Heart left ventricle (tissue), 16 donors: ENCODE measurements at regions of chr3 and their contacts with region 1.

Region 1: DNA sequence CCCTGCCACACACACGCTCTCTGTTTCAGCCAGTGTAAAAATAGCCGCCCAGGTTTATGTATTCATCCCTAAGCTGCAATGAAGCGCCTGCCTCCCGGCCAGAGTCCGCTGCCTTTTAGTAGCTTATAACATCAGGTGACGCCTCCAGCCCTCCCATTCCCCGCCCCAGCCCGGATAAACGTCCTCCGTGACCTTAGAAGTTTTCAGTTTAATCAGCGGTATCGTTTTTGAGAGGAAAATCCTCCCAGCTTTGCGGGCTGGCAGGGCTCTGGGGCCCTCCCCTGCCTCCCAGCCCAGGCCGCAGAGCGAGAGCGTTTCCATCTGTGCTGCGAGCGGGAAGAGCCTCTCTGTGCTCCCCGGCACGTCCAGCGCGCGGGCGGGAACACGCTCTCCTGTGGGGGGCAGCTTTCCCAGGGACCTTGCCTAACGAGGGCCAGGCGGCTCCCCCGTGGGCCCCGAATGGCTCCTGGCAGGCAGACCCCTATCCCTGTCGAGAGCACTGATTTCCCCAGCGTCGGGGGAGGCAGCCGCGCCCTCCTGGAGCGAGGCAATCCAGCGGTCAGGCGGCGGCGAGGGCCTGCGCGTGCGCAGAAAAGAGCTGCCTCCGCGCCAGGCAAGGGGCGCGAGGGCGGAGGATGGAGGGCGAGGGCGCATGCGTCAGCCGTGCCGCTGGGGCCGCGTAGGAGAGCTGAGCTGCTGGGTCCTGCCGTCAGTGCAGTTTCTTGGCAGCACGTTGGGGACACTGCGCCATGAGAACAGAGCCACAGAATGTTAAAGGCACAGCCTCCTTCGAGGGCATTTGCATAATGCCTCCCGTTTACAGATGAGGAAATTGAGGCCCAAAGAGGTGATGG is 71.1 kb downstream of the CCNL1 start:
- DNase-seq: peak; percentile 97 to 99 (median 98)
- ATAC-seq: peak; percentile 83 to 88 (median 84)
- H3K4me3 ChIP-seq: peak overlapping the region; percentile 25 to 73 (median 61)
- H3K27ac ChIP-seq: peak overlapping the region; percentile 96 to 100 (median 99)
- H3K4me1 ChIP-seq: peaks cover 5 to 68% (median 49%) of the 10 kb centered on the region in 12 donors
- H3K27me3 ChIP-seq: no peaks in the 10 kb centered on the region
- CTCF ChIP-seq: peak in 5 of 12 donors; percentile 7 to 38 (median 24)
- POLR2A ChIP-seq: peak; percentile 1 to 88

Region 2: GRCh38 chr3:156535162-156535627 is 553.6 kb before region 1 on chr3:
- intact Hi-C with region 1: loop called in 6 of 10 experiments (anchors 5 kb)
- DNase-seq: peak in 4 of 5 donors; percentile 58 to 89 (median 74)
- ATAC-seq: peak; percentile 81 to 96 (median 94)
- H3K4me3 ChIP-seq: no peak overlapping the region
- H3K27ac ChIP-seq: peak overlapping the region; percentile 16 to 84 (median 68)
- H3K4me1 ChIP-seq: peaks cover 0 to 31% (median 15%) of the 10 kb centered on the region in 12 donors
- H3K27me3 ChIP-seq: no peaks in the 10 kb centered on the region
- CTCF ChIP-seq: peak in 7 of 12 donors; percentile 12 to 46 (median 37)
- POLR2A ChIP-seq: no peak

Region 3: GRCh38 chr3:156554842-156555687 is 533.8 kb before region 1 on chr3 and contains the start of gene SSR3:
- intact Hi-C with region 1: loop called in 5 of 10 experiments (anchors 5 kb)
- DNase-seq: peak; percentile 100
- ATAC-seq: peak; percentile 99 to 100 (median 99)
- H3K4me3 ChIP-seq: peak within 1 kb of the TSS; percentile 81 to 98 (median 90)
- H3K27ac ChIP-seq: peak within 1 kb of the TSS; percentile 84 to 98 (median 93)
- H3K4me1 ChIP-seq: peaks cover 8 to 62% (median 41%) of the 10 kb centered on the region in 12 donors
- H3K27me3 ChIP-seq: no peaks in the 10 kb centered on the region
- CTCF ChIP-seq: peak in 9 of 12 donors; percentile 11 to 41 (median 19)
- POLR2A ChIP-seq: peak; percentile 56 to 90
- total RNA-seq, gene SSR3: 171 to 456 (median 197) TPM

Region 4: GRCh38 chr3:156816800-156817645 is 271.8 kb before region 1 on chr3:
- intact Hi-C with region 1: loop called in 4 of 10 experiments (anchors 2 to 10 kb)
- DNase-seq: peak; percentile 82 to 93 (median 88)
- ATAC-seq: peak; percentile 83 to 94 (median 90)
- H3K4me3 ChIP-seq: peak overlapping the region; percentile 40 to 76 (median 66)
- H3K27ac ChIP-seq: peak overlapping the region; percentile 51 to 93 (median 84)
- H3K4me1 ChIP-seq: peaks cover 0 to 32% (median 12%) of the 10 kb centered on the region in 12 donors
- H3K27me3 ChIP-seq: no peaks in the 10 kb centered on the region
- CTCF ChIP-seq: peak in 3 of 12 donors; percentile 23 to 31 (median 25)
- POLR2A ChIP-seq: peak in 1 of 2 donors; percentile 58

Region 5: GRCh38 chr3:156978481-156978961 is 110.3 kb before region 1 on chr3:
- intact Hi-C with region 1: no loop called
- DNase-seq: no peak
- ATAC-seq: no peak
- H3K4me3 ChIP-seq: no peak overlapping the region
- H3K27ac ChIP-seq: no peak overlapping the region
- H3K4me1 ChIP-seq: no peaks in the 10 kb centered on the region
- H3K27me3 ChIP-seq: no peaks in the 10 kb centered on the region
- CTCF ChIP-seq: no peak
- POLR2A ChIP-seq: no peak

Region 6: GRCh38 chr3:157107644-157108133 is 18.9 kb after region 1 on chr3:
- intact Hi-C with region 1: loop called in 1 of 10 experiments (anchors 2 kb)
- DNase-seq: no peak
- ATAC-seq: no peak
- H3K4me3 ChIP-seq: no peak overlapping the region
- H3K27ac ChIP-seq: peak overlapping the region in 8 of 12 donors; percentile 18 to 94 (median 69)
- H3K4me1 ChIP-seq: peaks cover 0 to 55% (median 14%) of the 10 kb centered on the region in 12 donors
- H3K27me3 ChIP-seq: no peaks in the 10 kb centered on the region
- CTCF ChIP-seq: no peak
- POLR2A ChIP-seq: no peak

Region 7: GRCh38 chr3:157130467-157131251 is 41.8 kb after region 1 on chr3:
- intact Hi-C with region 1: loop called in 9 of 10 experiments (anchors 1 to 5 kb)
- DNase-seq: peak in 4 of 5 donors; percentile 46 to 66 (median 55)
- ATAC-seq: peak; percentile 3 to 65 (median 18)
- H3K4me3 ChIP-seq: peak overlapping the region in 10 of 12 donors; percentile 12 to 43 (median 32)
- H3K27ac ChIP-seq: peak overlapping the region; percentile 68 to 88 (median 80)
- H3K4me1 ChIP-seq: peaks cover 5 to 77% (median 52%) of the 10 kb centered on the region in 12 donors
- H3K27me3 ChIP-seq: no peaks in the 10 kb centered on the region
- CTCF ChIP-seq: peak; percentile 47 to 77 (median 70)
- POLR2A ChIP-seq: no peak

Region 8: GRCh38 chr3:157182881-157183280 is 94.1 kb after region 1 on chr3:
- intact Hi-C with region 1: no loop called
- DNase-seq: no peak
- ATAC-seq: no peak
- H3K4me3 ChIP-seq: no peak overlapping the region
- H3K27ac ChIP-seq: no peak overlapping the region
- H3K4me1 ChIP-seq: no peaks in the 10 kb centered on the region
- H3K27me3 ChIP-seq: no peaks in the 10 kb centered on the region
- CTCF ChIP-seq: no peak
- POLR2A ChIP-seq: no peak